ENCODE measurements at regions of chr11 and their contacts with region 1.

Region 1: GRCh38 chr11:64000026-64000739 is 13.9 kb downstream of the OTUB1 start:
- DNase-seq: peak; percentile 94
- H3K4me3 Mint-ChIP-seq: peak overlapping the region; percentile 39
- H3K27ac Mint-ChIP-seq: no peak overlapping the region
- H3K4me1 Mint-ChIP-seq: peaks cover 3% of the 10 kb centered on the region
- H3K27me3 Mint-ChIP-seq: peaks cover 1% of the 10 kb centered on the region

Region 2: GRCh38 chr11:64146036-64146962 is 146.1 kb after region 1 on chr11:
- intact Hi-C with region 1: loop called (anchors 1 kb)
- DNase-seq: peak; percentile 92
- H3K4me3 Mint-ChIP-seq: no peak overlapping the region
- H3K27ac Mint-ChIP-seq: no peak overlapping the region
- H3K4me1 Mint-ChIP-seq: peaks cover 12% of the 10 kb centered on the region
- H3K27me3 Mint-ChIP-seq: no peaks in the 10 kb centered on the region

Region 3: DNA sequence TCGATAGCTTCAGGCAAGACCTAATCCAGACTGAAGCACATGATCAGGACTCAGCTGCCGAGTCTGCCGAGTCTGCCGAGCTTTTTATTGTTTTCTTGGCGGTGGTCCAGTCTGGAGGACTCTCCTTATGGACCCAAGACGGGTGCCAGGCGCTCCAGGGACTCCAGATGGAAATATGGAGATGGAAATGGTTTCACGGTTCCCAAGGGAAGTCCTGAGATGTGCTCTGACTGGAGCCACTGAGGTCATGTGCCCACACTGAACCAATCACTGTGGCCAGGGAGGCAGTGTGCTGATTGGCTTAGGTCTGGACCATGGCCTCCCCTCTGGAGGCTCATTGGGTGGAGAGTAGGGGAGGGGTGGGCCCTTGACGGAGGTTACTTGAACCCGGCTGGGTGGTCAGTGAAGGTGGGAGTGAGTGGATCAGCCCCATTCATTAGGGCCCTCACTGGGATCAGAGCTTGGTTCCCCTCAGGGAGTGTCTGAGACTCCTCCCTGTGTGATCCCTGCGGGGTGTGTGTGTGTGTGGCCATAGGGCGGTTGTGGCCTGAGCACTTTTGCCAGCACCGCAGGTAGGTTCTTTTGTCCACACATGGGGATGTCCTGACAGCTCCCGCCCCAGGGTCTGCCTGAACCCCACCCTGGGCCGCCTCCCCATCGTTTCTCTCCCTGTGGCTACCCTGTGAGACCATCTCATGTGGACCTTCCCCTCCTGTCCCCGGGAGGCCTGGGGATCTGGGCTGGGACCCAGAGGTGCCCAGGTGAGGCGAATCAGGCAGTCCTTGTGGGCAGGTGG is 372.8 kb after region 1 on chr11:
- intact Hi-C with region 1: no loop called
- DNase-seq: no peak
- H3K4me3 Mint-ChIP-seq: no peak overlapping the region
- H3K27ac Mint-ChIP-seq: no peak overlapping the region
- H3K4me1 Mint-ChIP-seq: no peaks in the 10 kb centered on the region
- H3K27me3 Mint-ChIP-seq: no peaks in the 10 kb centered on the region